ENCODE measurements at regions of chr11 and their contacts with region 1.

Region 1: DNA sequence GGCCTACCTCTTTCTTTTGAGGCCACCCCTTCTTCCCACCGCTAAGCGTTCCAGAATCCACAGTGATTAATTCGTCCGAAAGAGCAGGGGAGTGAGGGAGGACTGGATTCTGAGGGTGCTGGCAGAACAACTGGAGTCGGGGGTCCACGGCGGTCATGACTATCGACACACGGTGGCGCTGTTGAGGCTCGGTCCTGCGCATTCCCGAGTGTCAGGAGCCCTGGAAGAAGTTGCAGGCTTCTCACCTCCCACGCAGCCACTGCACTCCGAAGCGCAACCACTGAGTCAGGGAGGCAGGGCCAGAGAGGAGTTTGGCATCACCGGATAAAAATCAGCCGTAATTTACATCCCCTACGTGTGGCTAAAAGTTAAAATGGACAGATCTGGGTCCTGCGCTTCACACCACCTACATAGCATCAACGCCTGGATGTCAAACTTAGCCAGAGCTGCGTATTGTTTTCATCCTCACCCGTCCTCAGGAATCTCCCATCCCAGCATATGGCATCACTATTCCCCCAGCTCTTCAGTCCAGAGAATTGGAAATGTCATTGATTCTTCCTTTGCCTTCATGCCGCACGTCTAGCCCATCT is 10.7 kb upstream of the CTSF start:
- DNase-seq: peak; percentile 63 to 93 (median 78)
- ATAC-seq: peak; percentile 85 to 99 (median 96)
- H3K4me3 ChIP-seq: no peak overlapping the region
- H3K27ac ChIP-seq: no peak overlapping the region
- H3K4me1 ChIP-seq: no peaks in the 10 kb centered on the region
- H3K27me3 ChIP-seq: no peaks in the 10 kb centered on the region
- CTCF ChIP-seq: peak; percentile 54 to 76 (median 72)

Region 2: GRCh38 chr11:66616379-66617154 is 37.5 kb after region 1 on chr11 and contains the start of gene RBM14:
- intact Hi-C with region 1: no loop called
- DNase-seq: peak; percentile 98 to 100 (median 99)
- ATAC-seq: peak; percentile 93 to 97 (median 94)
- H3K4me3 ChIP-seq: peak within 1 kb of the TSS; percentile 74 to 92 (median 88)
- H3K27ac ChIP-seq: peak within 1 kb of the TSS; percentile 94 to 98 (median 96)
- H3K4me1 ChIP-seq: peaks cover 6 to 32% (median 13%) of the 10 kb centered on the region in 3 donors
- H3K27me3 ChIP-seq: no peaks in the 10 kb centered on the region
- CTCF ChIP-seq: no peak
- total RNA-seq, gene RBM14: 24.4 to 57.9 (median 31.7) TPM

Region 3: GRCh38 chr11:66677599-66678375 is 98.7 kb after region 1 on chr11 and contains the start of gene RBM4B:
- intact Hi-C with region 1: loop called in 1 of 3 experiments (anchors 2 kb)
- DNase-seq: peak; percentile 94 to 98 (median 96)
- ATAC-seq: peak; percentile 93 to 98 (median 95)
- H3K4me3 ChIP-seq: peak within 1 kb of the TSS; percentile 60 to 71 (median 68)
- H3K27ac ChIP-seq: peak within 1 kb of the TSS; percentile 86 to 98 (median 94)
- H3K4me1 ChIP-seq: peaks cover 4 to 22% (median 16%) of the 10 kb centered on the region in 3 donors
- H3K27me3 ChIP-seq: no peaks in the 10 kb centered on the region
- CTCF ChIP-seq: no peak
- total RNA-seq, gene RBM4B: 5.7 to 10.1 (median 6.5) TPM

Measured in pancreas (tissue), 10 donors.